ENCODE measurements at regions of chr9 and their contacts with region 1.

Region 1: DNA sequence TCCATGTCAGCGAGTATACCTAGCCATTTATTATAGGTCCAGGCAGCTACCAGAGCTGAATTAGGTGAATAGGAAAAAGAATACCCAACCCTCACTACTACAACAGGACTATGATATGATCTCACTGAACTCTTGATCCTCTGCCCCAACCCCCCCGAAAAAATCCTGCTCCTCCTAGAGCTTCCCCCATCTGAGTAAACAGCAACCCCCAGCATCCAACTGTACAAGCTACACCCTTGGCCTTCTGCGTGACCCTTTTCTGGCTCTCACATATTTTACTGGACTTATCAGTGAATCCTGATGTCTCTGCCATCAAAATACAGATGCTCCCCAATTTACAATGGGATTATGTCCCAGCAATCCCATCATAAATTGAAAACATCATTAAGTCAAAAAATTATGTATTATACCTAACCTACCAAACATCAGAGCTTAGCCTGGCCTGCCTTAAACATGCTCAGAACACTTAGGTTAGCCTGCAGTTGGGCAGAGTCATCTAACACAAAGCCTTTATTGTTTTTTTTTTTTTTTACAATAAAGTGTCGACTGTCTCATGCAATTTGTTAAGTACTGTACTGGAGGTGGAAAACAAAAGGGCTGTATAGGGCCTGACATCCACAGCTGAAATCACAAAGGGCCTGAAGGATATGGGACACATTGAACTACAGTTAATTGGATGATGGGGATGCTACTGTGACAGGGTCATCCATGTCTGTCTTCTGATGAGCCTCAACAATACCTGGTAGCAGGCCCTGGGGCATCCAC is 128.9 kb upstream of the ERCC6L2 start:
- DNase-seq: no peak
- ATAC-seq: no peak
- H3K4me3 Mint-ChIP-seq: no peak overlapping the region
- H3K27ac Mint-ChIP-seq: no peak overlapping the region
- H3K4me1 Mint-ChIP-seq: peaks cover 23% of the 10 kb centered on the region
- H3K27me3 Mint-ChIP-seq: peaks cover 57% of the 10 kb centered on the region

Region 2: DNA sequence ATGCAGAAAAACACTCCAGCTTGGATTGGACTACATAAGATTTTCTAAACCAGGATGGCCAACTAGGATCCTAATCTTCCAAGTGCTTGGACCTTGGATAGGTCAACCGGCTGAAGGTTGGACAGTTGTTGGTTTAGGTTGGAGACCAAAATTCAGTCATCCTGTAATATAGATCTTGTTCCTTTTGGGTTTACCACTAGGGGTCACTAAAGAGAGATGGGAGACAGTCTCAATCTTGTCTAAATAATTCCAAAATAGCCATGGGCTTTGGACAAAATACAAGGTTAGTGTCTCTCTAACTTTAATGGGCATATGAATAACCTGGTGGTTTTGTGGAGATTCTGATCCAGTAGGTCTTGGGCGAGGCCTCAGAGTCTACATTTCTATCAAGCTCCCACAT is 19.8 kb before region 1 on chr9:
- CTCF ChIA-PET with region 1: interaction called, 10 read pairs
- POLR2A ChIA-PET with region 1: no interaction called
- DNase-seq: no peak
- ATAC-seq: no peak
- H3K4me3 Mint-ChIP-seq: no peak overlapping the region
- H3K27ac Mint-ChIP-seq: no peak overlapping the region
- H3K4me1 Mint-ChIP-seq: peaks cover 46% of the 10 kb centered on the region
- H3K27me3 Mint-ChIP-seq: peaks cover 14% of the 10 kb centered on the region

Region 3: DNA sequence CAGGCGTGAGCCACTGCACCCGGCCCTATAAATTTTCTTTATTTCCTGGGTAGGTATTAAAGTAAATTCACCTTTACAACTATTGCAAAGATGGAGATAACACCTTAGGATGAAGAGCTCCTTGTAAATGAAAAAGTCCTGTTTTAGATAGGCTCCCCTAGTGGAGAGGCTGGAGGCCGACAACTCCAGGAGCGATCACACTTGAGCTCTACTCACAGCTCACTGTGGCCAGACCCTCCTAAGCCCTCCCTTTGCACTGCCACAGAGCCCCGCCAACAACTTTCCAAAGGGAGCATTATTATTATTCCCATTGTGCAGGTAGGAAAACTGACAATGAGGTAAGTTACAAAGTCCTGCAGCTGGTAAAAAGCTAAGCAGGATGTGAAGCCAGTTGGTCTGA is 10.2 kb before region 1 on chr9:
- CTCF ChIA-PET with region 1: interaction called, 11 read pairs
- POLR2A ChIA-PET with region 1: no interaction called
- DNase-seq: no peak
- ATAC-seq: no peak
- H3K4me3 Mint-ChIP-seq: no peak overlapping the region
- H3K27ac Mint-ChIP-seq: no peak overlapping the region
- H3K4me1 Mint-ChIP-seq: no peaks in the 10 kb centered on the region
- H3K27me3 Mint-ChIP-seq: peaks cover 41% of the 10 kb centered on the region

Region 4: GRCh38 chr9:95793924-95794828 is 47.6 kb after region 1 on chr9:
- CTCF ChIA-PET with region 1: no interaction called
- POLR2A ChIA-PET with region 1: no interaction called
- DNase-seq: no peak
- ATAC-seq: no peak
- H3K4me3 Mint-ChIP-seq: no peak overlapping the region
- H3K27ac Mint-ChIP-seq: no peak overlapping the region
- H3K4me1 Mint-ChIP-seq: peaks cover 3% of the 10 kb centered on the region
- H3K27me3 Mint-ChIP-seq: peaks cover 34% of the 10 kb centered on the region

Region 5: DNA sequence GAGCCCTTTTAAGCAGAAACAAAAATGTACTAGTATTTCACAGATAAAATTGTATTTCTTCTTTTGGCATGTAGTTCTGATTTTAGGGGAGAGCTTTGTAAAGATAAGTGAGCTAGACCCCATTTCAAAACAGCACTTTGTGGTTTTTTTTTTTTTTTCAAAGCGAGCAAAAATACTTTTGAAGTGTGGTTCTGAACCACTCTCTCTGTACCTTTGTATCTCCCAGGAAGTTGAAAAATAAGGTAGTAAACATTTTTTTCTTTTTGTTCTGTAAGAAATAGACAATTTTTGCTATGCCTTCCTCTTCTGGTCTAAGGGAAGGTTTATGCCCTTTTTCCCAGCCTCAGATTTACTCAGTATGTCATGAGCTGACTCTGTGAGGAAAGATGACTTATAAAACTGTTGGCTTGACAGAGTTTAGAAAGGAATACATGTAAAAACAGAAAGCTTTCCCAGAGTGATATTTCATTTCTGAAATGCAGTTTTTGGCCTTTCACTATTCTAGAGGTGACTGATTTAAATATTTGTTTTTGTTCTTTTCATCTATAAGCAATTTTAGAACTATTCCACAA is 141.4 kb after region 1 on chr9:
- CTCF ChIA-PET with region 1: no interaction called
- POLR2A ChIA-PET with region 1: no interaction called
- DNase-seq: no peak
- ATAC-seq: peak; percentile 70
- H3K4me3 Mint-ChIP-seq: peak overlapping the region; percentile 67
- H3K27ac Mint-ChIP-seq: peak overlapping the region; percentile 80
- H3K4me1 Mint-ChIP-seq: peaks cover 62% of the 10 kb centered on the region
- H3K27me3 Mint-ChIP-seq: no peaks in the 10 kb centered on the region

Measured in activated CD8-positive, alpha-beta T cell treated with anti-CD3 and anti-CD28 coated beads, Interleukin-2, amount 10 ng/mL, durations not matched to agents 7 days and 5 days (primary cell).